A673 (cell line): ENCODE measurements at regions of chr21 and their contacts with region 1.

Region 1: DNA sequence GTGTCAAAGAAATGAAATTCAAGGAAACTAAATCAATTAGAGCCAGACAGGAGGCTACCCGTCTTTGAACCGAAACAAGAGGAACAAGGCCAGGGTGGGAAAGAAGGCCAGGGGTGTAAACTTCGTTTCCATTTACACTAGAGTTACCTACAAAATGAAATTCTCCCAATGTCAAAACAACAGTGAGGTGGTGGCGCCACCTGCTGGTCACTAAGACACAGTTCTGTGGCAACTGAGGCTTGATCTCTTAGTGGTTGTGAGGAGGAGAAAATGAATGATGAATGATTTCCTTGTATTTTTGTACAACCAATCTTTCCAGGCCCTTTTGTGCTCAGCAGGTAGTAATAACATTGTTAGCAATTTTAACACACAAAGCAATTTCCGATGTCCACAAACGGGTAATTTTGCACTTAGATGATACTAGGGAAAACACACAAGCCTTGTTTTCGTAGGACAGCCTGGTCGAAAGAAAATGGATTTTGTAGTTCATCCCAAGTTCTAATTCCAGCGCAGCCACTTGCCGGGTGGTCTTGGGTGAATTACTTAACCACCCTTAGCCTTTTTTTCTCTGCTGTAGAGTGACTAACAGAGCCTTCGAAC is 54.8 kb upstream of the SOD1 start:
- DNase-seq: peak; percentile 71
- H3K4me3 ChIP-seq: no peak overlapping the region
- H3K27ac ChIP-seq: no peak overlapping the region
- H3K4me1 ChIP-seq: no peaks in the 10 kb centered on the region
- H3K27me3 ChIP-seq: no peaks in the 10 kb centered on the region
- CTCF ChIP-seq: peak; percentile 89

Region 2: DNA sequence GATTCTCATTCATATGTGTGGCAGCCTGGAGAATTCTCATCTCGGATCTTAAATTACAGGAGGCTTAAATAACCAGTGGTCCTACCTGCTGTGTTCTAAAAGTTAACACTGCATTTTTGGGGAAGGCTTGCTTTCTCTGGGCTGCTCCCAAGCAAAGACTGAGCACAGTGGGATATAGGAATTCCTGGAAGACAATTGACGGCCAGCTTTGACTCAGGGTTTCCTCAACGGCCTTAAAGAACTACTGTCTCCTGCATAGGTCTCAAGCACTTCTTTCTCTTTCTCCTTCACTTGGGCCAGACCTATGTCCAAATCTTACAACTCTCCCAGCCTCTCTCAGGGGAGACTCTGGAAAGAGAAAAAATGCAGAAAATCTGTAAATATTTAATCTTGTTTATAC is 1178.0 kb before region 1 on chr21:
- CTCF ChIA-PET with region 1: no interaction called
- POLR2A ChIA-PET with region 1: no interaction called
- intact Hi-C with region 1: no loop called
- DNase-seq: no peak
- H3K4me3 ChIP-seq: no peak overlapping the region
- H3K27ac ChIP-seq: no peak overlapping the region
- H3K4me1 ChIP-seq: no peaks in the 10 kb centered on the region
- H3K27me3 ChIP-seq: peaks cover 25% of the 10 kb centered on the region
- CTCF ChIP-seq: no peak

Region 3: GRCh38 chr21:31098576-31099005 is 506.1 kb before region 1 on chr21:
- CTCF ChIA-PET with region 1: no interaction called
- POLR2A ChIA-PET with region 1: no interaction called
- intact Hi-C with region 1: loop called (anchors 5 kb)
- DNase-seq: peak; percentile 62
- H3K4me3 ChIP-seq: no peak overlapping the region
- H3K27ac ChIP-seq: no peak overlapping the region
- H3K4me1 ChIP-seq: no peaks in the 10 kb centered on the region
- H3K27me3 ChIP-seq: no peaks in the 10 kb centered on the region
- CTCF ChIP-seq: peak; percentile 92

Region 4: DNA sequence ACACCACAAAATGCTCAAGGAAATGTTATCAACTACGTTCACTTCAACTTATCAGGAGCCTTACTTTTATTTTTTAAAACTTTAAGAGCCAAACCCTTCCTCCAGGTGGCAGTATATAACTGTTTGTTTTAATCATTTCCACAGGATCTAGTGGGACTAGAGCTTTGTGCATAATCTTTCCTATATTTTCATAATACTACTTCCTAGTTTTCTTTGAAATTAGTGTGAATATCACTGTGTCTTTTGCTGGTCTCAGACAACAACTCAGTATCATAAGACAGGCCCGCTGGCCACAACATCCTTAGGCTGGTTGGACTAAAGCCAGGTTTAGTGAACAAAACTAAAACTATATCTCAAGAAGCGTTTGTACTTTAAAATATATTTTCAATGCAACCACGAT is 406.1 kb before region 1 on chr21:
- CTCF ChIA-PET with region 1: interaction called, 3 read pairs
- POLR2A ChIA-PET with region 1: no interaction called
- intact Hi-C with region 1: loop called (anchors 1 kb)
- DNase-seq: peak; percentile 69
- H3K4me3 ChIP-seq: no peak overlapping the region
- H3K27ac ChIP-seq: no peak overlapping the region
- H3K4me1 ChIP-seq: no peaks in the 10 kb centered on the region
- H3K27me3 ChIP-seq: no peaks in the 10 kb centered on the region
- CTCF ChIP-seq: peak; percentile 65

Region 5: GRCh38 chr21:31558962-31559367 is 45.7 kb before region 1 on chr21:
- CTCF ChIA-PET with region 1: no interaction called
- POLR2A ChIA-PET with region 1: no interaction called
- intact Hi-C with region 1: no loop called
- DNase-seq: peak; percentile 95
- H3K4me3 ChIP-seq: peak overlapping the region; percentile 59
- H3K27ac ChIP-seq: peak overlapping the region; percentile 53
- H3K4me1 ChIP-seq: peaks cover 32% of the 10 kb centered on the region
- H3K27me3 ChIP-seq: peaks cover 23% of the 10 kb centered on the region
- CTCF ChIP-seq: peak; percentile 32; the same call in 1 of the 2 replicates